Transverse colon (tissue), 4 donors: ENCODE measurements at regions of chr5 and their contacts with region 1.

Region 1: DNA sequence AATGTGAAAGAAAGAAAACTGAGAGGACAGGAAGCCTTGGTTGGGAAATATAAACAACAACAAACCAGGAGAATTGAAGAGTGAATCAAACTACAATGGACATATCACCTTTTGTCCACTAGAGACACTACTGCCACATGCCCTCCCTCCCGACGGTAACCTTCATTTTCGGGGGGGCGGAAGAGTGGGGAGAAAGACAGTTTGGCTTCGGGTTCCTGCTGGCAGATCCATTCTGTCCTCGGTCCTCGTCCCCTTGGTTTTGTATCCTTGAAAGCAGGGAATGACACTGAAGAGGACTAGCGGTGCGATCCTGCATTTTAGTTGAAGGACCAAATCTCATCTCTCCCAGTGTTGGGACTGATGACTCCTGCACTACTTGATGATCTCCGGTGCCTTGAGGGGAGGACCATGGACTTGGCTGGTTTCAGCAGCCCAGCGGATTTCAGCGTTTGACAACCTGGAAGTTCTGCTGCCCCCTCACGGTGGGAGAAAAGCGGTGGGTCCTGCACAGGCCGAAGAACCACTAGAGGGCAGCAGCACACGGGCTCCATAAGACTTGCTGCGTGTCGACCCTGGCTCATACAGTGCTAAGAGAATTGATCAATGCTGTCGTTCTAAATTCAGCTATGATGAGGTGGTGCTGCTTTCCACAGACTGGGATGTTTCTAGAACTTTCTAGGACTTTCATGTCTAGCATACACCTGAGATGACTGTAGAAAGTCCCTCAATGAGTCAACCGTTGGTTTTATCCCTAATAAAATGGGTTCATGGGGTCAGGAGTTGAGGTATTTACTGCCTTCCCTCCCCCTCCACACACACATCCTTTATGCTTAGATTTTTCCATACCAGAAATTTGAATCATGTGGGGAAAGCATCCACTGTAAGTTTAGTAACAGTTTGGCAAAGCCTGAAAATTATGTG is 15.1 kb upstream of the ZNF131 start:
- DNase-seq: peak; percentile 91
- H3K4me3 ChIP-seq: peak overlapping the region in 3 of 4 donors; percentile 32 to 48 (median 39)
- H3K27ac ChIP-seq: peak overlapping the region; percentile 53 to 76 (median 70)
- H3K4me1 ChIP-seq: peaks cover 0 to 11% (median 5%) of the 10 kb centered on the region in 4 donors
- H3K27me3 ChIP-seq: no peaks in the 10 kb centered on the region
- CTCF ChIP-seq: peak; percentile 98 to 100 (median 99)
- EP300 ChIP-seq: no peak
- POLR2A ChIP-seq: no peak

Region 2: GRCh38 chr5:41156739-41157138 is 1948.9 kb before region 1 on chr5:
- in situ Hi-C with region 1: no loop called
- intact Hi-C with region 1: no loop called
- DNase-seq: no peak
- H3K4me3 ChIP-seq: no peak overlapping the region
- H3K27ac ChIP-seq: no peak overlapping the region
- H3K4me1 ChIP-seq: peaks cover 0 to 19% (median 2%) of the 10 kb centered on the region in 4 donors
- H3K27me3 ChIP-seq: no peaks in the 10 kb centered on the region
- CTCF ChIP-seq: no peak
- EP300 ChIP-seq: no peak
- POLR2A ChIP-seq: no peak

Region 3: GRCh38 chr5:42605490-42605889 is 500.1 kb before region 1 on chr5:
- in situ Hi-C with region 1: no loop called
- intact Hi-C with region 1: no loop called
- DNase-seq: no peak
- H3K4me3 ChIP-seq: no peak overlapping the region
- H3K27ac ChIP-seq: no peak overlapping the region
- H3K4me1 ChIP-seq: peaks cover 0 to 11% (median 0%) of the 10 kb centered on the region in 4 donors
- H3K27me3 ChIP-seq: no peaks in the 10 kb centered on the region
- CTCF ChIP-seq: no peak
- EP300 ChIP-seq: no peak
- POLR2A ChIP-seq: no peak

Region 4: GRCh38 chr5:42962124-42962523 is 143.5 kb before region 1 on chr5:
- in situ Hi-C with region 1: no loop called
- intact Hi-C with region 1: no loop called
- DNase-seq: no peak
- H3K4me3 ChIP-seq: no peak overlapping the region
- H3K27ac ChIP-seq: no peak overlapping the region
- H3K4me1 ChIP-seq: no peaks in the 10 kb centered on the region
- H3K27me3 ChIP-seq: peaks cover 33% of the 10 kb centered on the region
- CTCF ChIP-seq: no peak
- EP300 ChIP-seq: no peak
- POLR2A ChIP-seq: no peak

Region 5: GRCh38 chr5:43156388-43156787 is 50.8 kb after region 1 on chr5:
- in situ Hi-C with region 1: no loop called
- intact Hi-C with region 1: no loop called
- DNase-seq: no peak
- H3K4me3 ChIP-seq: no peak overlapping the region
- H3K27ac ChIP-seq: no peak overlapping the region
- H3K4me1 ChIP-seq: no peaks in the 10 kb centered on the region
- H3K27me3 ChIP-seq: no peaks in the 10 kb centered on the region
- CTCF ChIP-seq: no peak
- EP300 ChIP-seq: no peak
- POLR2A ChIP-seq: no peak

Region 6: DNA sequence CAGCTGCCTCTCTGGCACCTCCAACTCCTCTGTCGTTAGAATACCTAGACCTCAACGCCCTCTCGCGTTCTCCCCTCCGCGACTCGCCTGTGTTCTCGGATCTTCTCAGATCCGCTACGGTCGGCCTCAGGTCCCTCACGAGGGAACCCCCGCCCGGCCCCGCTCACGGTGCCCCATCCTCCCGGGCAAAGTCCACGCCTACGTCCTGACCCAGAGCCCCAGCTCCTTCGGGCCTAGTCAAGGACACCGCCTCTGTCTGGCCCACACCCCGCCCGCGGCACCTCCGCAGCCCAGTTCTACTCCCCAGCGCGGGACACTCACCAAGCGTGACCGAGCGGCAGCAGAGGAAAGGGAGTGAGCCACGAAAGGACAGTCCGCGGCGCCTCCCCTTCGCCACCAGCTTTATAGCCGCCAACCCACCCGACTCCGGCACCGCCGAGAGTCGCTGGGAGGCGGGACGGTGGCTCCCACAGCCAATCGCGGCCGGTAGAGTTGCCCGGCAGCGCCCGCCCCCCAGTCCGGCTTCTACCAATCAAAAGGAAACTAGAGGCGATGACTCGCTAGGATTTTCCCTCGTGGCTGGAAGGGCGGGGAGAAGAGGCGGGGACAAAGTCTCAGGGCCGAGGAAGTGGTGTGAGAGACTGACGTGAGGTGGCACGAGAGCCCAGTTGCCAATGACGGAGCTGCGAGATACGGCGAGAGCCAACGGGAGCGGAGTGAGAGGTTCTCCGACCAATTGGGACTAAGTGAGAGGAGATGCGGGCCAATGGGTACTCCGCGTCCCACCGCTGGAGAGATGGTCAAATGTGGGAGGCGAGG is 207.6 kb after region 1 on chr5 and contains the start of gene HMGCS1:
- in situ Hi-C with region 1: loop called in 1 of 4 experiments (anchors 10 kb)
- intact Hi-C with region 1: no loop called
- DNase-seq: peak; percentile 99
- H3K4me3 ChIP-seq: peak within 1 kb of the TSS; percentile 53 to 85 (median 74)
- H3K27ac ChIP-seq: peak within 1 kb of the TSS; percentile 90 to 96 (median 94)
- H3K4me1 ChIP-seq: peaks cover 9 to 42% (median 21%) of the 10 kb centered on the region in 4 donors
- H3K27me3 ChIP-seq: no peaks in the 10 kb centered on the region
- CTCF ChIP-seq: peak in 1 of 5 experiments; percentile 27
- EP300 ChIP-seq: no peak
- POLR2A ChIP-seq: peak; percentile 97
- total RNA-seq, gene HMGCS1: 16.9 to 51.4 (median 41.8) TPM

Region 7: GRCh38 chr5:43389679-43390329 is 284.2 kb after region 1 on chr5:
- in situ Hi-C with region 1: no loop called
- intact Hi-C with region 1: loop called (anchors 10 kb)
- DNase-seq: peak; percentile 33
- H3K4me3 ChIP-seq: no peak overlapping the region
- H3K27ac ChIP-seq: no peak overlapping the region
- H3K4me1 ChIP-seq: peaks cover 0 to 5% (median 0%) of the 10 kb centered on the region in 4 donors
- H3K27me3 ChIP-seq: no peaks in the 10 kb centered on the region
- CTCF ChIP-seq: peak; percentile 68 to 80 (median 77)
- EP300 ChIP-seq: no peak
- POLR2A ChIP-seq: no peak